ENCODE measurements at regions of chr13 and their contacts with region 1.

Region 1: DNA sequence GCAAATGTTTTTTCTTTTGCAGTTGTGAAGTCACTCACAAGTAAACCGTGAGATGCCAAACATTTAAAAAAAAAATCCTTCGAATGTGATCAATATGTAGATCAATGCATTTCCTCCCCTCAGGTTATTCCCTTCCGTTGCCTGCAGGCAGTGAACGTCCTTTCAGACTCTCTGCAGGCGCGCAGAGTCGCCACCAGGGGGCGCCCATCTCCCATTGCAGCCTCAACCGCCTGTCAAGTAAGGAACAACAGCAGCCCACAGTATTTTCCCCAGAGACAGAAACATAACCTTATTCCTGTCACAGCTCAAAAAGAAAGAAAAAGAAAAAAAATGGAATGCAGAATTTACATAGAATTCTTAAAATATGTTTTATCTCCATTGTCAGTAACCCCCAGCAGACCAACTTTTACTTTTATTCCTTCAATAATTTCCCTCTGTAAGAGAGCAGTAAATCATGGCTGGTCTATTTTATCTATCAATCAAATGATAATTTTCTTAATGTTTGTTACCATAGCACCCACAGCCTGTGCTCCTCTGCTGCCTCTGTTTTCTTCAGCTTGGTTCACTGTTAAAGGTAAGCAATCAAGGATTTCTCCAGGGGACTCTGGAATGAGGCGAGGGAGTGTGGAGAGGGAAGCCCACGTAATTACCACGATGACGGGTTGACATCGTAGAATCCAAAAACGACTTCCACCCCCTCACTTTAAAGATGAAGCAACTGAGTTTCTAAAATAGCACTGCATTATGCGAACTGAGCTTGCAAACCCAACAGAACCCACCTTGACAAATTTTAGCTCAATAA is 637.6 kb upstream of the ARGLU1 start:
- DNase-seq: peak; percentile 71
- H3K4me3 ChIP-seq: no peak overlapping the region
- H3K27ac ChIP-seq: no peak overlapping the region
- H3K4me1 ChIP-seq: peaks cover 24% of the 10 kb centered on the region
- H3K27me3 ChIP-seq: no peaks in the 10 kb centered on the region
- CTCF ChIP-seq: peak; percentile 90 to 97
- POLR2A ChIP-seq: no peak

Region 2: GRCh38 chr13:107185889-107186288 is 19.6 kb before region 1 on chr13:
- CTCF ChIA-PET with region 1: interaction called, 17 read pairs
- POLR2A ChIA-PET with region 1: no interaction called
- dilution Hi-C with region 1: no loop called
- intact Hi-C with region 1: loop called (anchors 1 kb)
- DNase-seq: peak; percentile 68
- H3K4me3 ChIP-seq: no peak overlapping the region
- H3K27ac ChIP-seq: peak overlapping the region; percentile 78
- H3K4me1 ChIP-seq: peaks cover 15% of the 10 kb centered on the region
- H3K27me3 ChIP-seq: no peaks in the 10 kb centered on the region
- CTCF ChIP-seq: no peak
- POLR2A ChIP-seq: no peak

Region 3: DNA sequence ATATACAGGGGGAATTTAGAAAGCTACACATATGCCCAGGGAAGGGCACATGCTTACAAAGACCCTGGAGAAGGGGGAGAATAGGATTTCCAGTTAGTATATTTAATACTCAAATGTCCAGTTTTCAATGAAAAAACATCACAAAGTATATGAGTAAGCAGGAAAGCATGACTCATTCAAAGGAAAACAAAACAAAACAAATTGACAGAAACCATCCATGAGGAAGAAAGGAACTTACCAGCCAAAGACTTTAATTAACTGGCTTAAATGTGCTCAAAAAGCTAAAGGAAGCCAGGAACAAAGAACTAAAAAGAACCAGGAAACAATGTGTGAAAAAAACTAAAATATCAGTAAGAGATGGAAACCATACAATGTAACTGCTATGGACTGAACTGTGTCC is 78.7 kb after region 1 on chr13:
- CTCF ChIA-PET with region 1: interaction called, 5 read pairs
- POLR2A ChIA-PET with region 1: no interaction called
- dilution Hi-C with region 1: no loop called
- intact Hi-C with region 1: loop called (anchors 2 kb)
- DNase-seq: peak; percentile 83
- H3K4me3 ChIP-seq: no peak overlapping the region
- H3K27ac ChIP-seq: peak overlapping the region; percentile 93
- H3K4me1 ChIP-seq: peaks cover 11% of the 10 kb centered on the region
- H3K27me3 ChIP-seq: no peaks in the 10 kb centered on the region
- CTCF ChIP-seq: no peak
- POLR2A ChIP-seq: no peak

Region 4: DNA sequence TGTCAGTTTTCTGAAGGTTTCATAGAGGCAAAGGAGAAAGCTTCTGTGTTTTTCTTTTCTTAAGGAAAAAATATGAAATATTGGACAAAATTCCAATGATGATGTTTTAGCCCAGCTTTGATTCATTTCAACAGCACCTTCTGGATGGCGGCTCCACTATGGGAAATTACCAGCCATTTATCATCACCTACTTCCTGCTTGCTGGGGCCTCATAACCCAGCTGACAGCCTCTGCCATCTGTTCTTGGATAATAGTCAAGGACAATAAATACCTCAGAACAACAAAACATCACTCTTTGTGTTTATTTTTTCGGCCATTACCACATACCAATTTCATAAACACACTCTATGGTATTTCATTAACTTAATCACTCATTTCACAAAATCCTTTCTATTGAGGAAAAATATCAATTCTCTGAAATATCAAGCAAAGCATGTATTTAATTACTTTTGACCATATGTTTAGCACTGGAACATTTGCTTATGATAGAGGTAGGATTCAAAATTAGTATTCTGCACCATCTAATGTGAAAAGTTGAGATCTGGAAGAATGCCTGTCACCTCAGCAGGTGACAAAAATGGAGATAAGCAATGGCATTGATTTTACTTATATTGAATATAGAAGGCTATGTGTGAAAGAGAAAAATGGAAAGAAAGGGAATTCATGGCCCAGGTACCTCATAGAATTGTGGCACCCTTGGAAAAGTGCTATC is 380.1 kb after region 1 on chr13:
- CTCF ChIA-PET with region 1: no interaction called
- POLR2A ChIA-PET with region 1: no interaction called
- dilution Hi-C with region 1: no loop called
- intact Hi-C with region 1: loop called (anchors 10 kb)
- DNase-seq: peak; percentile 78
- H3K4me3 ChIP-seq: no peak overlapping the region
- H3K27ac ChIP-seq: no peak overlapping the region
- H3K4me1 ChIP-seq: peaks cover 13% of the 10 kb centered on the region
- H3K27me3 ChIP-seq: no peaks in the 10 kb centered on the region
- CTCF ChIP-seq: no peak
- POLR2A ChIP-seq: no peak

Region 5: DNA sequence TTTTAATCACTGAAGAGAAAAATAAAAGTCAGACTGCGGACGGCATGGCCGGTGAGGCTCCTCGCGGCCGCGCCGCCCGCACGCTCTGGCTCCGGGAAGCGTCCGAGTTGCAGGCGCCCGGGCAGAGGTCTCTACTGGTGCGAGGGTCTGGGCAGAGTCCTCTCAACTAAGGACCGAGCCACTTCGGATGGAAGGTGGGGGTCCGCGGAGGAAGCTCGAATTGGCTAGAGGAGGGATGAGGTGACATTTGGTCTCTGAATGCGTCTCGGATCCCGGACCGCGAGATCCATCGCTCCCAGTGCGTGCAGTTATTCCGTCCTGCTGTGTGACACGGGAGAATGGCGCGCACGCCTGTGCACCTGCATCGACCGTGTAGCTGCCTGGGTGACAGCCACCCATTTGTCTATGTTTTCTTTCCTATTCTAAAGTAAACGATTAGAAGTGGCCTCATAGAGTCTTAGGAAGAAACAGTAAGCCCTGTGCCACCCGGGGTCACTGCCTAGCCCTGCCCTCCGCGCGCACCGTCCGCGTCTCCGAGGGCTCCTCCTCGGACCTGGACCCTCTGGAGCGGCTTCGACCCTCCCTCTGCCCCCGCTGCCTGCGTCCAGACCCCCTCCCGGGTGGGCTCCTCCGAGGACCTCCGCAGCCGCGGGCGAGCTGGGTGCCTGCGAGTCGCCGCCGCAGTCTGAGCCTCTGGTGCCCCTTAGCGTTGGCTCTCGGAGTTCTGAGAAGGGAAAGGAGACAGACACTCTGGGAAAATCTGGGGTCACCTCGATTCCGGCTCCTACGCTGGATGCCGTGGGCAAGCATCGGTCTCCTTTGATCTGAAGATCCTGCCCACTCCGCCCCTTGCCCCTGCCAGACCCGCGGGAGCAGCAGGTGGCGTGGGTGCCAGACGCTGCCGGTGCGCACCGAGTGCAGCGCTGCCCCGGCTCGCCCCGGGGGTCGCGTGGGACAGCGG is 662.5 kb after region 1 on chr13:
- CTCF ChIA-PET with region 1: interaction called, 26 read pairs
- POLR2A ChIA-PET with region 1: interaction called, 4 read pairs
- dilution Hi-C with region 1: no loop called
- intact Hi-C with region 1: loop called (anchors 1 kb)
- DNase-seq: peak; percentile 64
- H3K4me3 ChIP-seq: peak overlapping the region; percentile 51 to 82 (median 54)
- H3K27ac ChIP-seq: peak overlapping the region; percentile 56
- H3K4me1 ChIP-seq: peaks cover 15% of the 10 kb centered on the region
- H3K27me3 ChIP-seq: peaks cover 5 to 8% of the 10 kb centered on the region in 2 experiments
- CTCF ChIP-seq: peak; percentile 52 to 77
- POLR2A ChIP-seq: no peak

Measured in endothelial cell of umbilical vein (primary cell).